Heart left ventricle (tissue), 16 donors: ENCODE measurements at regions of chr15 and their contacts with region 1.

Region 1: DNA sequence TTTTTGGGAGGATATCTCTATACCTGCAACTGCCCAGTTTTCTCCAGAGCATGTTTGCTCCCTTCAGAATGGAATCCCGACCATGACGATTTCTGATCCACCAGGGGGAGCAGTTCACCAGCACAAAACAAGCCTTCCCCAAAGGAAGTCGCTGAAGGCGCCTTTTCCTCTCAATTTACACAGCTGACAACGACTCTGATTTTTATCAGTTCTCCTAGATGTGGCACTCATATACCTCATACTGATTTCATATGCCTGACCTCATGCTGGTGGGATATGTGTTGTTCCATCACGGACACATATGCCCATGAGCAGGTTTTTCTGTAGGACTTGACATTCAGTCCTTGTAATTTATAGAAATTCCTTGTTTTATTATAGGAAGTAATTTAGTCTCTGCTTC is 1028.2 kb downstream of the MCTP2 start:
- DNase-seq: peak in 4 of 5 donors; percentile 51 to 65 (median 64)
- ATAC-seq: peak in 3 of 4 donors; percentile 70 to 83 (median 81)
- H3K4me3 ChIP-seq: no peak overlapping the region
- H3K27ac ChIP-seq: peak overlapping the region in 7 of 12 donors; percentile 12 to 68 (median 30)
- H3K4me1 ChIP-seq: peaks cover 0 to 36% (median 6%) of the 10 kb centered on the region in 12 donors
- H3K27me3 ChIP-seq: no peaks in the 10 kb centered on the region
- CTCF ChIP-seq: peak; percentile 64 to 92 (median 78)
- POLR2A ChIP-seq: no peak

Region 2: GRCh38 chr15:95025924-95026728 is 233.4 kb before region 1 on chr15:
- intact Hi-C with region 1: loop called in 2 of 10 experiments (anchors 10 kb)
- DNase-seq: peak in 3 of 5 donors; percentile 16 to 27 (median 26)
- ATAC-seq: peak in 2 of 4 donors; percentile 33 to 47
- H3K4me3 ChIP-seq: no peak overlapping the region
- H3K27ac ChIP-seq: no peak overlapping the region
- H3K4me1 ChIP-seq: no peaks in the 10 kb centered on the region
- H3K27me3 ChIP-seq: no peaks in the 10 kb centered on the region
- CTCF ChIP-seq: peak; percentile 36 to 66 (median 47)
- POLR2A ChIP-seq: no peak

Region 3: GRCh38 chr15:95129574-95129973 is 129.9 kb before region 1 on chr15:
- intact Hi-C with region 1: no loop called
- DNase-seq: peak in 4 of 5 donors; percentile 31 to 58 (median 48)
- ATAC-seq: peak in 2 of 4 donors; percentile 77 to 82
- H3K4me3 ChIP-seq: peak overlapping the region in 1 of 12 donors; percentile 24
- H3K27ac ChIP-seq: peak overlapping the region in 2 of 12 donors; percentile 24 to 48
- H3K4me1 ChIP-seq: peaks cover 0 to 39% (median 12%) of the 10 kb centered on the region in 12 donors
- H3K27me3 ChIP-seq: no peaks in the 10 kb centered on the region
- CTCF ChIP-seq: no peak
- POLR2A ChIP-seq: no peak

Region 4: DNA sequence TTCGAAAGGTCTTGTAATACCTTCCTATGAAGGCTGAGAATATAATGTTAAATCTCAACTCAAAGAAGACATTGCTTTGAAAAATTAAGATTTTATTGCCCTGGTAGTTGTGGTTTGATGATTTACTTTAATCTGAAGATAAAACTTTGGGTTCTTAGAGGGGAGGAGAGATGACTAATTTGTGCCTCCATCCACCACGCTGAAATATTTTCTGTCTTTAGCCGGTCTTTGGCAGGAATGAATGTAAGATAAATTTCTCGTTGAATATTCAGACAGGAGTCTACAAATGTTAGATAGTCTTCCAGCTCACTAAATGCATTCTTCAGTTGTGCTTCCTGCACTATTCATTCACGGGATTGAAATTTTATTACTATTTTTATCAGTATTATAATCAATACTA is 226.7 kb after region 1 on chr15:
- intact Hi-C with region 1: no loop called
- DNase-seq: no peak
- ATAC-seq: no peak
- H3K4me3 ChIP-seq: no peak overlapping the region
- H3K27ac ChIP-seq: no peak overlapping the region
- H3K4me1 ChIP-seq: no peaks in the 10 kb centered on the region
- H3K27me3 ChIP-seq: no peaks in the 10 kb centered on the region
- CTCF ChIP-seq: no peak
- POLR2A ChIP-seq: no peak

Region 5: DNA sequence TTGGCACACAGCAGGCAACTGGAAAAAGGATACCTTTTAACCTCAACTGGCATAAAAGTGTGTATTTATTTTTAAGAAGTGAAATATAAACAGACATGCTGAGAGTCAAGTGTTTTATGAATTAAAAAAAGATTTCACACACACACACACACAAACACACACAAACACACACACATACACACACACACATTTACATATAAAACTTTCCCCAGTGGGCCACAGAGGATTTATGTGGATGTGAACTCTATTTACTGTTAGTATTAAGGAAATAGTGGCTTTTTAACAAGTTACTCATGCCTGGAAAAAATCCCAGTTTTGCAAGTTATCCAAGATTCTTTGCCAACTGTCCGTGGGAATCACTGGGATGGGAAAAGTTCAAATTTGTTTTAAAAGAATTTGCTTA is 345.1 kb after region 1 on chr15:
- intact Hi-C with region 1: loop called in 1 of 10 experiments (anchors 10 kb)
- DNase-seq: peak in 2 of 5 donors; percentile 27 to 59
- ATAC-seq: peak in 2 of 4 donors; percentile 62 to 69
- H3K4me3 ChIP-seq: no peak overlapping the region
- H3K27ac ChIP-seq: peak overlapping the region in 8 of 12 donors; percentile 30 to 74 (median 54)
- H3K4me1 ChIP-seq: peaks cover 0 to 25% (median 7%) of the 10 kb centered on the region in 12 donors
- H3K27me3 ChIP-seq: no peaks in the 10 kb centered on the region
- CTCF ChIP-seq: no peak
- POLR2A ChIP-seq: no peak

Region 6: GRCh38 chr15:96345560-96346399 is 1086.3 kb after region 1 on chr15:
- intact Hi-C with region 1: loop called (anchors 1 to 10 kb)
- DNase-seq: peak in 4 of 5 donors; percentile 74 to 85 (median 82)
- ATAC-seq: peak; percentile 62 to 85 (median 76)
- H3K4me3 ChIP-seq: peak overlapping the region; percentile 22 to 91 (median 67)
- H3K27ac ChIP-seq: peak overlapping the region; percentile 2 to 96 (median 92)
- H3K4me1 ChIP-seq: peaks cover 0 to 76% (median 22%) of the 10 kb centered on the region in 12 donors
- H3K27me3 ChIP-seq: peaks cover 0 to 95% (median 20%) of the 10 kb centered on the region in 9 donors
- CTCF ChIP-seq: peak; percentile 44 to 77 (median 68)
- POLR2A ChIP-seq: peak in 1 of 2 donors; percentile 45

Region 7: GRCh38 chr15:96585484-96586386 is 1326.2 kb after region 1 on chr15:
- intact Hi-C with region 1: loop called in 1 of 10 experiments (anchors 10 kb)
- DNase-seq: no peak
- ATAC-seq: no peak
- H3K4me3 ChIP-seq: no peak overlapping the region
- H3K27ac ChIP-seq: no peak overlapping the region
- H3K4me1 ChIP-seq: no peaks in the 10 kb centered on the region
- H3K27me3 ChIP-seq: peaks cover 0 to 18% (median 4%) of the 10 kb centered on the region in 9 donors
- CTCF ChIP-seq: peak in 6 of 12 donors; percentile 23 to 42 (median 35)
- POLR2A ChIP-seq: no peak